Dorsolateral prefrontal cortex (tissue), 120 donors: ENCODE measurements at regions of chr4 and their contacts with region 1.

Region 1: DNA sequence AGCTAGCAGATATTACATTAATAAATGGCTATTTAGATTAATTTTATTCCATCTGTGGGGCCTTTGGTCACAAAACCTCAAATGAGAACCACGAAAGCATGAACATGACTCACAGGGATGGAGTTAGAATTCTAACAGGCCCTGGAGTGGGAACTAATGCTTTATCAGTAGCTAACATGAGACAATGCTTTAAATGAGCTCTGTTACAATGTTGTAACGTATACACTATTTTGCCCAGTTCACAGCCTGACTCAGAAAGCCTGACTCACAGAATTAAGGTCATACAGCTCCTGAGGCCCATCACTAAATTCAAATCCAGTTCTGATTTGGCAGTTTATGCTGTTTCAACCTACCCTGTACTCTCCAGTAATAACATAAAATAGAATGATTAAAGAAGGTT is 23.2 kb downstream of the VEGFC start:
- DNase-seq: no peak
- H3K4me3 ChIP-seq: no peak overlapping the region
- H3K27ac ChIP-seq: no peak overlapping the region
- H3K27me3 ChIP-seq: no peaks in the 10 kb centered on the region
- CTCF ChIP-seq: no peak

Region 2: GRCh38 chr4:176611951-176612350 is 157.6 kb before region 1 on chr4:
- intact Hi-C with region 1: no loop called
- DNase-seq: no peak
- H3K4me3 ChIP-seq: no peak overlapping the region
- H3K27ac ChIP-seq: no peak overlapping the region
- H3K27me3 ChIP-seq: peaks cover 0 to 7% (median 0%) of the 10 kb centered on the region in 45 donors
- CTCF ChIP-seq: no peak

Region 3: DNA sequence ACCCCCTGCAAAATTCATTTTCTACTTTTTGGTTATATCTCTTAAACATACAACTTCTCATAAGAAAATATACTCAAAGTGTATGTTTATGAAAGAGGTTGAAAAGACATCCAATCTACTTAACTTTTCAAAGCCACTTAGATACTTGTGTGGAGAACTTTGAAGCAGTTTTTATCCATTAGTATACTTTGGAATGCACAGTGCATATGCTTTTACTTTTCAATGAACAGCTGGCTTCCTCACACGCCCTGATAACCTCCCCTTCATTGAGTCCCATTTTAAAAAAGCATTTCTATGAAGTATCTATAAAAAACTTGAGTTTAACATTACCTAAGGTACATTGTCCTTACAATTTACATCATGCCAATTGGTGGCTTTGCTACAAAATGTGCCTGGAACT is 50.6 kb before region 1 on chr4:
- intact Hi-C with region 1: loop called in 1 of 2 experiments (anchors 2 kb)
- DNase-seq: no peak
- H3K4me3 ChIP-seq: no peak overlapping the region
- H3K27ac ChIP-seq: no peak overlapping the region
- H3K27me3 ChIP-seq: no peaks in the 10 kb centered on the region
- CTCF ChIP-seq: no peak

Region 4: GRCh38 chr4:176735300-176735699 is 34.2 kb before region 1 on chr4:
- intact Hi-C with region 1: no loop called
- DNase-seq: no peak
- H3K4me3 ChIP-seq: no peak overlapping the region
- H3K27ac ChIP-seq: no peak overlapping the region
- H3K27me3 ChIP-seq: no peaks in the 10 kb centered on the region
- CTCF ChIP-seq: no peak